Left ventricle myocardium superior (tissue), 1 donor: ENCODE measurements at regions of chr3 and their contacts with region 1.

Region 1: DNA sequence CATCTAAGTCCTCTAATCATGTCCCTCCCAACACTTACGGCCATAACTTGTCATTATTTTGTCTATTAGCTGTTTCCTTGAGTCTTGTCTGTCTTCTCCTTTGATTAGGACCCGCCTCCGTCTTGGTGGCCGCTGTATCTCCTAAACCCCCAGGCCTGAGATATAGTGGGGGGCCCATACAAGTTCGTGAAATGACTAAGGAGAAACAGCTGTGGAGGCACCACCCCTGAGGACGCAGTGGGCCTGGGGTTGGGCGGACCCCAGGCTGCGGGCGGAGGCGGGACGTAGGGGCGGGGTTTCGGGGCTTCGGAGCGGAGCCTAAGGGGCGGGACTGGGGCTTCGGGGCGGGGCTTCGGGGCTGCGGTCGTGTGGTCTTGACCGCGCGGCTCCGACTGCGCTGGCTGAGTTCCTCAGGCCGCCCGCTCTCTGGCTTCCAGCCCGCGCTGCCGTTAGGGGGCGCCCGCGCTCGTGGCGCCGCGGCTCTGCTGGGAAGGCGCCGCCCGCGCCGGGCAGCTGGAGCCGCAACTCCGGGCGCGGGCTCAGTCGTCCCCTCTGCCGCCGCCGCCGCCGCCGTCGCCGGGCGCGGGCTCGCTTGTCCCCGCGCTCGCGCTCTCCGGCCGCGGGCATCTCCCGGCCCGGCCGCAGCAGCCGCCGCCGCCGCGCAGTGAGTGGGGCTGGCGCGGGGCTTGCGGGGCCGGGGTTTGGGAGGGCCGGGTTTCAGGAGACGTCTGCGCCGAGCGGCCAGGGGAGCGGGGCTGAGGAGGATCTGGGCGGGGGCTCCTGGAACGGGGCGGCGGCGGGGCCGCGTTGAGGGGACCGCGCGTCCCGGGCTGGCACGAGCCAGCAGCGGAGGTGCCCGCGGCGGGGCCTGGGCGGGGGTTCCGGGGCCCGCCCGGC is at the start of gene KCTD6:
- DNase-seq: peak; percentile 97
- ATAC-seq: peak; percentile 96
- total RNA-seq, gene KCTD6: 8.5 TPM

Region 2: DNA sequence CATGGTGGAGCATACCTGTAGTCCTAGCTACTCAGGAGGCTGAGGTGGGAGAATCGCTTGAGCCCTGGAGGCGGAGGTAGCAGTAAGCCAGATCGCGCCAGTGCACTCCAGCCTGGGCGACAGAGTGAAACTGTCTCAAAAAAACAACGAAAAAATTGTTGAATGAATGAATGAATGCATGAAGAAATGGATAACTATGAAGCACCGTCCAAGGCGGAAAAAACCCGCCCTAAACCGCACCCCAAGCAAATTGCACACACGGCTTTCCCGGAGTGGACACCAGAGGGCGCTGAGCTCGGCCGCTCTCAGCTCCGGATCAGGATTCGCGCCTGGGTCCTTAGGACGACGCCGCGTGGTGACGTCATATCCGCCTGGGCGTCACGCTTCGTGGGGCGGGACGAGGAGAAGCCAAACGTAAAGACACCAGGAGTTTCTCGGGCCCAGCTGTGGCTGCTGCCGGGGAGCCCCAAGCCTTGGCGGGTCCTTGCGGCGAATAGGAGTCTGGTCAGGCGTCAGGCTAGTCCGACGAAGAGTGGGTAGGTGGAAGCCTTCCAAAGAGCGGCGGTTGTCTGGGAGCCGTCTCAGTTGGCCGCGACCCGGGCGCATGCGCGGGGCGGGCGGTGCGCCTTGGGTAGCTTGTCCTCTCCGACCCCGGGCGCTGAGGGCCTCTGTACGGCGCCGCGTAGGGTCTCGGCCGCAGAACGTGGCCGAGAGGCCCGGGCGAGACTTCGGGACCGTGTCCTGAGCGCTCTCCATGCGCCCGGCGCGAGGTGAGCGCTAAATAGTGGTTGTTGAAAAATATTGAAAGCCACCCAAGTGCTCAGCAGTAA is 185.7 kb before region 1 on chr3 and contains the starts of genes HTD2 and RPP14:
- intact Hi-C with region 1: loop called (anchors 10 kb)
- DNase-seq: peak; percentile 100
- ATAC-seq: peak; percentile 95
- total RNA-seq, gene HTD2: 14.9 TPM
- total RNA-seq, gene RPP14: 25.0 TPM

Region 3: GRCh38 chr3:58386626-58387365 is 105.0 kb before region 1 on chr3:
- intact Hi-C with region 1: no loop called
- DNase-seq: peak; percentile 35
- ATAC-seq: peak; percentile 78